Dorsolateral prefrontal cortex (tissue), 120 donors: ENCODE measurements at regions of chr5 and their contacts with region 1.

Region 1: GRCh38 chr5:113294311-113295110 is 140.3 kb downstream of the TSSK1B start:
- DNase-seq: peak; percentile 33 to 82 (median 76)
- H3K4me3 ChIP-seq: peak overlapping the region; percentile 50 to 85 (median 72)
- H3K27ac ChIP-seq: peak overlapping the region in 48 of 59 donors; percentile 1 to 84 (median 70)
- H3K27me3 ChIP-seq: no peaks in the 10 kb centered on the region
- CTCF ChIP-seq: peak in 42 of 56 donors; percentile 6 to 59 (median 28)

Region 2: GRCh38 chr5:113204525-113205161 is 89.9 kb before region 1 on chr5:
- intact Hi-C with region 1: loop called in 1 of 2 experiments (anchors 5 kb)
- DNase-seq: peak in 5 of 10 donors; percentile 15 to 48 (median 25)
- H3K4me3 ChIP-seq: peak overlapping the region in 7 of 59 donors; percentile 0 to 19 (median 8)
- H3K27ac ChIP-seq: peak overlapping the region in 4 of 59 donors; percentile 1 to 52 (median 22)
- H3K27me3 ChIP-seq: no peaks in the 10 kb centered on the region
- CTCF ChIP-seq: no peak

Region 3: DNA sequence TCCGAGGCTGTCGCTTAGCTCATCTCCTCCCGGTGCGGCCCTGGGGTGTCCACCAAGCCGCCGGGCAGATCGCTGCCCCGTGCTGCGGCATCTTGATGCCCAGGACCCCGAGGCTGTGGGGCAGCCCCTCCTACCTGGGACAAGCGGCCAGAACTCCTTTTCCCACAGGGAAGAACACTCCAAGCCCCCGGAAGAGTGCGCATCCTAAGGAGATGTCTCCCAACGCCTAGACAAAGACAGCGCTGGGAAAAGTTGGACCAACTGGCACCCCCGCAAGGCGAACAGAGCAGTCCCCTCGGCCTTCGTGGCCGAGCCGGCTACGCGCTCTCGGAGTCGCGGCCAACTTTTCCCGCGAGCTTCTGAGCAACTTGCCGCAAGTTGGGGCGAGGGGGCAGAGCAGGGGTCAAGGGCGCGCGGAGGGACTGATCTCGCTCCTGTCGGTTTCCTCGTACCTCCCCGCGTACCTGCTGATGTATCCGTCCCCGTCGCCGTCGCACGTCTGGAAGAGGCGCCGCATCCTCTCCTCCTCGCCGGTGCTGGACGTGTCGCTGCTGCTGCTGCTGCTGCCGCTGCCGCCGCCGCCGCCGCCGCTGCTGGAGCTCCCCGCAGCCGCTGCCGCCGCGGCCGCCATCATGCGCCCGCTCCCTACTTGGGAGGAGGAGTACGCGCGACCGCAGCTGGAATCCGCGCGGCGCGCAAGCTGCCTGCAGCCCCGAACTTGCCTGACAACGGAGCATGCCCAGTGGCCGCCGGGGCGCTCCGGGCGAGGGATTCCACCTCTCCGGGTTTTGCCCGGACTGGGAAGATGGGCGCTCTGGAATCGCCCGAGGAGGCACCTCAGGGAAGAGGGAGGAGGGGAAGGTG is 193.5 kb after region 1 on chr5 and contains the start of gene MCC:
- intact Hi-C with region 1: no loop called
- DNase-seq: peak; percentile 23 to 80 (median 67)
- H3K4me3 ChIP-seq: peak within 1 kb of the TSS; percentile 35 to 79 (median 64)
- H3K27ac ChIP-seq: peak within 1 kb of the TSS in 1 of 59 donors; percentile 18
- H3K27me3 ChIP-seq: peaks cover 0 to 17% (median 0%) of the 10 kb centered on the region in 45 donors
- CTCF ChIP-seq: no peak
- total RNA-seq, gene MCC: 12.6 to 71.6 (median 21.7) TPM